ENCODE measurements at regions of chr5 and their contacts with region 1.

Region 1: GRCh38 chr5:58828258-58828657 is 245.4 kb downstream of the RAB3C start:
- DNase-seq: no peak
- ATAC-seq: no peak
- H3K4me3 ChIP-seq: no peak overlapping the region
- H3K27ac ChIP-seq: no peak overlapping the region
- H3K4me1 ChIP-seq: no peaks in the 10 kb centered on the region
- H3K27me3 ChIP-seq: no peaks in the 10 kb centered on the region
- CTCF ChIP-seq: no peak
- POLR2A ChIP-seq: no peak
- RAD21 ChIP-seq: no peak

Region 2: DNA sequence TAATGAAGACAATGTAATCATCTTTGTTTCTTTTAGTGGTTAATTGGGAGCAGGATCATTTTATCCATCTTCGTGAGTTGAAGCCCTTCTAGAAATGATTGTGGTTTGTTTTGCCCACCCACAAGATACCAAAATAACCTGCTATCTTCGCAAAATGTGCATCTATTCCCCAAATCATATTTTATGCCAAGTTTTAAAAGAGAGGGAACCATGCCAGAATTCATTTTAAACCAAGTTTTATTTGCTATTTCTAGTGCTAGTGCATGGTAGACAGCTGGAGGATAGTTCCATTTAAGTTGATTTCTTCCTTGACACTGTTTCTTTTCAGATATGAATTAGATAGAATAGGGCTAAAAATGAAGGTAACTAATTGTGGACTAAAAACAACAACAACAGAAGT is 141.2 kb before region 1 on chr5:
- CTCF ChIA-PET with region 1: no interaction called
- POLR2A ChIA-PET with region 1: no interaction called
- dilution Hi-C with region 1: no loop called
- in situ Hi-C with region 1: no loop called
- intact Hi-C with region 1: no loop called
- DNase-seq: no peak
- ATAC-seq: no peak
- H3K4me3 ChIP-seq: no peak overlapping the region
- H3K27ac ChIP-seq: no peak overlapping the region
- H3K4me1 ChIP-seq: no peaks in the 10 kb centered on the region
- H3K27me3 ChIP-seq: no peaks in the 10 kb centered on the region
- CTCF ChIP-seq: no peak
- POLR2A ChIP-seq: no peak
- RAD21 ChIP-seq: no peak

Region 3: DNA sequence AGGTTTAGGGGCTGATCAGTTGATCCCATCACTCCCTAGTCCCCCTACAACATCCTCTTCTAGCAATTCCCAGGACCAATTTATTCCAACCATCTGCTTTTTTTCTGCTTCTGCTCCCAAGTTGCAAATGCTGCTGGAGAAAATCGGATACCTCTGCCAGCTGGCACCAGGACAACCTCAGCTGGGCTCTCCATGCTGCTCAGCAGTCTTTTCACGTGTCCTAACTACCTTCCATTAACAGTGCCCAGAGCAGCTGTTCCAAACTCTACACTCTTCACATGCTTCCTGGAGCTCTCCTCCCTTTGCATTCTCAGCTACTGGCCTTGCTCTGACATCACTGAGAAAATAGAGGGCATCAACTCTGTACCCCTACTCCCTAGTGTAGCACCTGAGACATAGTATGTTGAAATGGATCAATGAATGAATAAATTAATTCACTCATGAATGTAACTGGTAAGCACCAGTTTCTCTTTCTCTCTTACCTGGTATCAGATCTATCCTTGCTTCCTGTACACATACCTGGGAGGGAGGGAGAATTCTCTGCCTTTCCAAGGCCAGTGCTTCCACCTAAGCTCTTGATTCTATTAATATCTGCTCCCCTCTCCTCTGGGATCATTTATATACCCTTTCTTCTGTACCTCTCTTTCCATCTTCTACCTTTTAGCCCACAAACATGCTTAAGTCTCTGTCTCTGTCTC is 54.4 kb before region 1 on chr5:
- CTCF ChIA-PET with region 1: no interaction called
- POLR2A ChIA-PET with region 1: no interaction called
- dilution Hi-C with region 1: no loop called
- in situ Hi-C with region 1: no loop called
- intact Hi-C with region 1: loop called (anchors 5 kb)
- DNase-seq: no peak
- ATAC-seq: no peak
- H3K4me3 ChIP-seq: no peak overlapping the region
- H3K27ac ChIP-seq: no peak overlapping the region
- H3K4me1 ChIP-seq: no peaks in the 10 kb centered on the region
- H3K27me3 ChIP-seq: no peaks in the 10 kb centered on the region; the same call in 1 of the 2 replicates
- CTCF ChIP-seq: no peak
- POLR2A ChIP-seq: no peak
- RAD21 ChIP-seq: no peak

Region 4: DNA sequence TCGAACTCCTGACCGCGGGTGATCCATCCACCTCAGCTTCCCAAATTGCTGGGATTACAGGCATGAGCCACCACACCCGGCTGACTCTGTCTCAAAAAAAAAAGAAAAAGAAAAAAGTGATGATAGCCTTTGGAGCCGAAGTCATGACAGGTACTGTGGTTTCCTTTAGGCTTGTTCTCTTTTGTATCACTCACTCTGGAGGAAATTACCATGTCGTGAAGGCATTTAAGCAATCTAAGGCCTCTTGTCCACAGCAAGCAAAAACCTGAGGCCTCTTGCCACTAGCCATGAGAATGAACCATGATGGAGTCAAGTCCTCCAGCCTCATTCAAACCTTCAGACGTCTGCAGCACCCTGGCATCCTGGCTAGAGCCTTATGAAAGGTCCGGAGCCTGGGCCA is 40.7 kb after region 1 on chr5:
- CTCF ChIA-PET with region 1: no interaction called
- POLR2A ChIA-PET with region 1: no interaction called
- dilution Hi-C with region 1: no loop called
- in situ Hi-C with region 1: no loop called
- intact Hi-C with region 1: no loop called
- DNase-seq: no peak
- ATAC-seq: no peak
- H3K4me3 ChIP-seq: no peak overlapping the region
- H3K27ac ChIP-seq: no peak overlapping the region
- H3K4me1 ChIP-seq: no peaks in the 10 kb centered on the region
- H3K27me3 ChIP-seq: peaks cover 2% of the 10 kb centered on the region; the same call in 1 of the 2 replicates
- CTCF ChIP-seq: no peak
- POLR2A ChIP-seq: no peak
- RAD21 ChIP-seq: no peak

Region 5: GRCh38 chr5:59328709-59329296 is 500.5 kb after region 1 on chr5:
- CTCF ChIA-PET with region 1: no interaction called
- POLR2A ChIA-PET with region 1: no interaction called
- dilution Hi-C with region 1: no loop called
- in situ Hi-C with region 1: no loop called
- intact Hi-C with region 1: no loop called
- DNase-seq: peak; percentile 50
- ATAC-seq: no peak
- H3K4me3 ChIP-seq: no peak overlapping the region
- H3K27ac ChIP-seq: no peak overlapping the region
- H3K4me1 ChIP-seq: no peaks in the 10 kb centered on the region
- H3K27me3 ChIP-seq: 0 out of 2 replicates have a peak, but pooled peaks cover 1% of the 10 kb centered on the region
- CTCF ChIP-seq: no peak
- POLR2A ChIP-seq: no peak
- RAD21 ChIP-seq: no peak

Measured in IMR-90 (cell line).